HCT116 (cell line): ENCODE measurements at regions of chr5 and their contacts with region 1.

Region 1: GRCh38 chr5:179623003-179623880 is at the start of gene HNRNPH1:
- DNase-seq: peak; percentile 97
- ATAC-seq: peak; percentile 77
- H3K4me3 ChIP-seq: peak within 1 kb of the TSS; percentile 91 to 98
- H3K27ac ChIP-seq: peak within 1 kb of the TSS; percentile 97
- H3K4me1 ChIP-seq: peaks cover 21 to 35% of the 10 kb centered on the region in 2 experiments
- H3K27me3 ChIP-seq: no peaks in the 10 kb centered on the region
- CTCF ChIP-seq: no peak
- POLR2A ChIP-seq: peak; percentile 99
- RAD21 ChIP-seq: no peak
- total RNA-seq, gene HNRNPH1: 788 TPM

Region 2: DNA sequence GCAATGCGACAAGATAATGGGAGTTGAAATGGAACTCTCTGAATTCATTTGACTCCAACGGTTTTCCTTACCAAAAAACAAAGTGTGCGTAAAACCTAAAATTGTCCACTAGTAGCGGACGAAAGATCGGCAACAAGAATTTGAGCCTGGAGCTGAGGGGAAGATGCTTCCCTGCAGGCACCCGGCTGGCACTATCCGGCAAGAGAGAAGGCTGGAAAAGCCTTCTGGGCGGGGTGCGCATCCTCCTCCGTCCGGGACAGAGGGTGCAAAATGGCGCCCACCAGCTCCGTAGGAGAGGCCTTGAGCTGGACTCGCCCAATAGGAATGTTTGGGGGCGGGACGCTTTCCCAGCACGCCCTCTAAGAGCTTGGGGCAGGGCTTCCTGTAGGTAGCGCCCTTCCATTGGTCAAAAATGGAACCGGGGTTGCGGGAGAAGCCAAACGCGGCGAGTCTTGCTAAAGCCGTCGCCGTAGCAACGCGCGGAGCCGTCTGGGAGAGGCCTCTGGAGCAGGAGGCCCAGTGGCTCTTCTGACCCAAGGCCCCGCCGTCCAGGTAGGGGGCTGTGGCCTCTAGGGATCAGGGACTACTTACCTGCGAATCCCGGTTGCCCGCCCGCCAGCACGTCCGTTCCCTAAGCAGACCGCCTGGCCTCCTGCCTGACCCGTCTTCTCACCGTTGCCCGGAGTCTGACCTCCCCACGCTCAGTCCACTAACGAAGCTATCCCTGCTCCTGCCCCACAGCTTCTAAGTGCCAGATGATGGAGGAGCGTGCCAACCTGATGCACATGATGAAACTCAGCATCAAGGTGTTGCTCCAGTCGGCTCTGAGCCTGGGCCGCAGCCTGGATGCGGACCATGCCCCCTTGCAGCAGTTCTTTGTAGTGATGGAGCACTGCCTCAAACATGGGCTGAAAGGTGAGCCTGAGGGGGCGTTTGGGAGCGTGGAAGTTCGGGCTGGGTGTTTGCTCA is 63.7 kb before region 1 on chr5:
- CTCF ChIA-PET with region 1: interaction called, 4 read pairs
- POLR2A ChIA-PET with region 1: interaction called, 21 read pairs
- RAD21 ChIA-PET with region 1: no interaction called
- intact Hi-C with region 1: loop called (anchors 5 kb)
- DNase-seq: peak; percentile 99
- ATAC-seq: peak; percentile 98
- H3K4me3 ChIP-seq: peak overlapping the region; percentile 97 to 99
- H3K27ac ChIP-seq: peak overlapping the region; percentile 72
- H3K4me1 ChIP-seq: peaks cover 9 to 22% of the 10 kb centered on the region in 2 experiments; a peak in 3 of 4 replicates
- H3K27me3 ChIP-seq: no peaks in the 10 kb centered on the region
- CTCF ChIP-seq: no peak
- POLR2A ChIP-seq: peak; percentile 80
- RAD21 ChIP-seq: no peak

Region 3: DNA sequence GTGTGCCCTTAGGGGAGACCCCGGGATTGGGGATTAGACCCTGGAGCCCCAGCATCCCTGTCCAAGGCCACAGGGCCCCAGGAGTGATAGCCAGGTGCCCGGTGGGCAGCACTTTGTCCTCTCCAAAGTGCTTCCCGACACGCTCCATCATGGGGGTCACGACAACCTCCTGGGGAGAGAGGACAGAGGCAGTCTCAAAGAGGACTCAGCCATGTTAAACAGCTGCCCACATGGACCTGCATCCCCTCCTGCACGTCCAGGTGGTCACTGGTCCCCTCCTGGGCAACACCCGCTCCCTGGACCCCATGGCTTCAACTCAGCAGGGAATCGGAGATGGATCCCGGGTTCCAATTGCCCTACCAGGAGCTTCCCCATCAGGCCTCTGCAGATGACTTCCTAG is 20.3 kb after region 1 on chr5:
- CTCF ChIA-PET with region 1: no interaction called
- POLR2A ChIA-PET with region 1: interaction called, 12 read pairs
- RAD21 ChIA-PET with region 1: no interaction called
- intact Hi-C with region 1: no loop called
- DNase-seq: no peak
- ATAC-seq: no peak
- H3K4me3 ChIP-seq: no peak overlapping the region
- H3K27ac ChIP-seq: no peak overlapping the region
- H3K4me1 ChIP-seq: no peaks in the 10 kb centered on the region
- H3K27me3 ChIP-seq: no peaks in the 10 kb centered on the region
- CTCF ChIP-seq: no peak
- POLR2A ChIP-seq: no peak
- RAD21 ChIP-seq: no peak

Region 4: DNA sequence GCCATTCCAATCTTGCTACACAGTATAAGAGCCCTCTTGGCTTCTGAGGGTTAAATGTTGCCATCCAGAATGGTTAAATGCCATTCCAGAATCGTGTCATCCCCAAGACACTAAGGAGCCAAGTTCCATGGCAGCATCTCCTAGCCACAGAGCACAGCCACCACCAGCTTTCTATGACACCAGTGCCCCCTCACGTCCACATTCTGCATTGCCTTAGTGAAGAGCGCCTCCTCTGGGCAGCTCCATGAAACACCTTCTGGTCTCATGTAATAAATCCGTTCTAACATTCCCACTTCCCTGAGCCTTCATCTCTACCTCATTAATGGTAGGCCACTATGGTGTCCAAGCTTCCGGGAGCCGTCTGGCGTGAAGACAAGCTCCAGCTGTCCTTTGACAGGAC is 45.1 kb after region 1 on chr5:
- CTCF ChIA-PET with region 1: interaction called, 7 read pairs
- POLR2A ChIA-PET with region 1: interaction called, 4 read pairs
- RAD21 ChIA-PET with region 1: no interaction called
- intact Hi-C with region 1: loop called (anchors 5 kb)
- DNase-seq: peak; percentile 48
- ATAC-seq: peak; percentile 91
- H3K4me3 ChIP-seq: no peak overlapping the region
- H3K27ac ChIP-seq: no peak overlapping the region
- H3K4me1 ChIP-seq: no peaks in the 10 kb centered on the region
- H3K27me3 ChIP-seq: no peaks in the 10 kb centered on the region
- CTCF ChIP-seq: peak; percentile 99
- POLR2A ChIP-seq: no peak
- RAD21 ChIP-seq: peak; percentile 79

Region 5: DNA sequence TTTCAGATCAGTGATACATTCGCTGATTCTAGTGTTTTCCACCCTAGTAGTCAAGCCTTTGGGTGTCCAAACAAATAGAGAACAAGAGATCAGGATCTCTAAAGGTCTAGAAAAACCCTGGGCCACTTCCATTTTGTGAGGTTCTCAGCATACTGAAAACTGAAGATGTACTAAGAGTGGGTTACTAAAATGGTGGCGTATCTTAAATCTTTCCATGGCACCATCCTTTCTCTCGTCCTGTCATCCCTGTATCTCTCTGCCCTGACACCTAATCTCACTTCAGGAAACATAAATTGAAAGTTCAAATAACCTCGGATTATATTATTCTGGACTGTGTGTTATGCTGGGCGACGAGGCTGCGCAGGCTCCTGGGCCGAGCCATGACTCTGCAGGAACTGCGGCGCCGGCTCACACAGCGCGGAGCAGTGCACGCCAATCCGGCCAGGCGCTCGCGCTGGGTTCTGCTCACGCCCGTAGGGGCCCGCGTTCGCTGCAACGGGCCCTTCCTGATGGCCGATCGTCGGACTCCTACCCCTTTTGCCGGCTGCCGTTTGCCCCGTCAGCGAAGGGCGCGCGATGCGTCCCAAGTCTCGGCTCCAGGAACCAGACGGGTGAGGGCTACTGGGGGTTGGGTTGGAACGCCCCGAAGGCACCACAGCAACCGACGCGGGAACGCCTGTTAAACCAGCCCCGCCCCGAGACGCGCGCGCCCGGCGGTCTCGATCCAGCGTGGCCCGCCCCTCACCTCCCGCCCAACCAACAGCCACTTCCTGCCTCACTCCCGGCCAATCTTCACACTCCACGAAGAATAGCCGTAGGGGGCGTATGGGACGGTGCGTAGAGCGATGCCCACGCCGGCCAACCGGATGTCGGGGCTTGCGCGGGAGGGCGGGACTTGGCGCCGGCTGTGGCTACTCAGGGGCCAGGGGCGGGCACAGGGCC is 75.0 kb after region 1 on chr5:
- CTCF ChIA-PET with region 1: no interaction called
- POLR2A ChIA-PET with region 1: interaction called, 9 read pairs
- RAD21 ChIA-PET with region 1: no interaction called
- intact Hi-C with region 1: loop called (anchors 1 kb)
- DNase-seq: peak; percentile 97
- ATAC-seq: peak; percentile 90
- H3K4me3 ChIP-seq: peak overlapping the region; percentile 83 to 87
- H3K27ac ChIP-seq: peak overlapping the region; percentile 98
- H3K4me1 ChIP-seq: peaks cover 7 to 30% of the 10 kb centered on the region in 2 experiments; a peak in 3 of 4 replicates
- H3K27me3 ChIP-seq: no peaks in the 10 kb centered on the region
- CTCF ChIP-seq: no peak
- POLR2A ChIP-seq: peak; percentile 30
- RAD21 ChIP-seq: no peak